ENCODE measurements at regions of chr3 and their contacts with region 1.

Region 1: GRCh38 chr3:152298393-152299242 is 29.9 kb downstream of the MBNL1 start:
- DNase-seq: peak; percentile 73
- ATAC-seq: peak; percentile 60
- H3K4me3 ChIP-seq: peak overlapping the region; percentile 29; the same call in 1 of the 2 replicates
- H3K27ac ChIP-seq: peak overlapping the region; percentile 73
- H3K4me1 ChIP-seq: peaks cover 39% of the 10 kb centered on the region
- H3K27me3 ChIP-seq: no peaks in the 10 kb centered on the region
- CTCF ChIP-seq: no peak

Region 2: DNA sequence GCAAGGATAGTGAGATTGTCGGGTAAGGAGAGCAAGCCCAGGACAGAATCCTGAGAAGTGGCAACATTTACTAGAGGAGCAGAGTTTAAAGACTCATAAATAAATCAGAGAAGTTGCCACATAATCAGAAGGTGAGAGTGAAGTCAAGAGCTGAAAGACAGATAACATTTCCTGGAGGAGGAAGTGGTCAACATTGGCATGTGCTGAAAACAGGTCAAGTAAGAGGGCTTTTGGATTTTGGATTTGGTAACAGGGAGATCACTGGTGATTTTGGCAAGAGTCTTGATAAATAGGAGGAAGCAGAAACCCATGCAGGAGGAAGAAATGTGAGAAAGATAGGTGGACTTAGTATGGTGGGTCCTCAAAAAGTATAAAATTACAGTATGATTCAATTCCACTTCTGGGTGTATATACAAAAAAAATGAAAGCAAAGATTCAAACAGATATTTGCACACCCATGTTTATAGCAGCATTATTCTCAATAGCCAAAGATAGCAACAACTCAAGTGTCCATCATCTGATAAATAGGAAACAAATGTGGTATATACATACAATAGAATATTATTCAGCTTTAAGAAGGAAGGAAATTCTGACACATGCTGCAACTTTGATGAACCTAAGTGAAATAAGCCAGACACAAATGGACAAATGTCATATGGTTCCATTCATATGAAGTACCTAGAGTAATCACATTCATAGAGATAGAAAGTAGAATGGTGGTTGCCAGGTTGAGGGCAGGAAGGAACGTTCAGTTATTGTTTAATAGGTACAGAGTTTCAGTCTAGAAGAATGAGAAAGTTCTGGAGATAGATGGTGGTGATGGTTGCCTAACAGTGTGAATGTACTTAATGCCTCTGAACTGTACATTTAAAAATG is 57.2 kb before region 1 on chr3:
- CTCF ChIA-PET with region 1: no interaction called
- POLR2A ChIA-PET with region 1: no interaction called
- intact Hi-C with region 1: no loop called
- DNase-seq: peak; percentile 42
- ATAC-seq: no peak
- H3K4me3 ChIP-seq: no peak overlapping the region
- H3K27ac ChIP-seq: no peak overlapping the region
- H3K4me1 ChIP-seq: peaks cover 13% of the 10 kb centered on the region; the same call in 1 of the 2 replicates
- H3K27me3 ChIP-seq: no peaks in the 10 kb centered on the region
- CTCF ChIP-seq: no peak

Region 3: DNA sequence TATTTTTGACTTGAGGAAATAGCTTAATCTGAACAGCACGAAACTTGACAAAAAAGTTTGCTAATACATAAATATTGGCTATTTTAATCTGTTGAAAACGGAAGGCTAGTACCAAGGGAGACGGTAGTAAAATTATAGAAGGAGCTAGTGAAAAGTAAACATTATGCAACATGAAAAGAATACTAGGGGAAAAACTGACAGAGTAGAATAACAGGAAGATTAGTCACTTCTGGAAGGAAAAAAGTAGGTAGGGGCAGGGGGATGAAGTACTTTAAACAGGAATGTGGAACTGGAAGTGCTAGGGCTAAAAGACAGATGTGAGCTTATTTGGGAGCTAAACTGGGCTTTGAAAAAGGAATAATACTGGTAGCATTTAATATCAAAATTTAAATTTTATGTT is 30.2 kb after region 1 on chr3:
- CTCF ChIA-PET with region 1: interaction called, 3 read pairs
- POLR2A ChIA-PET with region 1: interaction called, 13 read pairs
- intact Hi-C with region 1: no loop called
- DNase-seq: peak; percentile 94
- ATAC-seq: peak; percentile 63
- H3K4me3 ChIP-seq: peak overlapping the region; percentile 52
- H3K27ac ChIP-seq: peak overlapping the region; percentile 93
- H3K4me1 ChIP-seq: peaks cover 58% of the 10 kb centered on the region
- H3K27me3 ChIP-seq: no peaks in the 10 kb centered on the region
- CTCF ChIP-seq: no peak

Region 4: DNA sequence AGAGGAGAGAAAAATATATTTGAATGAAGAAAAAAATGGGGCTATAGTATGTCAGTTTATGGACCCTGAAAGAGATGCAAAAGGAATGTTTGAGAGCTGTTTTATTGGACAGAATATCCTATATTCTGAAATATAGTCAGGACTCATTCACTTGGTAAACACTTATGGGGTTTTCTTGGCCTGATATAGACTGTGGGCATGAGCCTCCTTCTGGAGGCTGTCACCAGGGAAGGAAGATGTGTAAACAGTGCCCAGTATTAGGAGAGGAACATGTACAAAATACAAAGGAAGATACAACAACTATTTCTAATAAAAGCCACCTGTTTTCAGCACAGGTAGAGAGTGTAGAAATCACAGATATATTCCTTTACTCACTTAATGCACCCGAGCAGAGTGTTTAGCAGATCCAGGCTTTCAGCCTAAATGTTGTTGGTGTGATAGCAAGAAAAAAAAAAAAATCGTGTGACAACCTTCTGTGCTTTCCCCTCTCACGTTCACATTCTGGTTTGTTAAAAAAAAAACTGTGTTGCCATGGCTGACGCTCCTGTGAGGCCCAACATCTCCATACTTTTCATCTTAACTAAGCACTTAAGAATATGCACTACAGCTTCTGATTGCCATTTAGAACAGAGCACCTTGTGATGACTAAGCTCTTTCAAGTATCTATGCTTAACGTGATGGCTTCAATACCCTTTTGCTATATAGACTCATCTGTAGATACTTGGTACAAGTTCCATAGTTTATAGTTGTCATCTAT is 104.3 kb after region 1 on chr3:
- CTCF ChIA-PET with region 1: no interaction called
- POLR2A ChIA-PET with region 1: interaction called, 14 read pairs
- intact Hi-C with region 1: no loop called
- DNase-seq: peak; percentile 31
- ATAC-seq: peak; percentile 62
- H3K4me3 ChIP-seq: no peak overlapping the region
- H3K27ac ChIP-seq: 0 out of 2 replicates have a peak overlapping the region, but pooled peaks have one; percentile 17
- H3K4me1 ChIP-seq: peaks cover 59% of the 10 kb centered on the region
- H3K27me3 ChIP-seq: no peaks in the 10 kb centered on the region
- CTCF ChIP-seq: no peak

Region 5: GRCh38 chr3:152539191-152539768 is 240.7 kb after region 1 on chr3:
- CTCF ChIA-PET with region 1: no interaction called
- POLR2A ChIA-PET with region 1: interaction called, 16 read pairs
- intact Hi-C with region 1: no loop called
- DNase-seq: no peak
- ATAC-seq: no peak; the same call in 1 of the 2 replicates
- H3K4me3 ChIP-seq: no peak overlapping the region
- H3K27ac ChIP-seq: no peak overlapping the region
- H3K4me1 ChIP-seq: no peaks in the 10 kb centered on the region
- H3K27me3 ChIP-seq: peaks cover 10% of the 10 kb centered on the region; the same call in 1 of the 2 replicates
- CTCF ChIP-seq: peak; percentile 58

Region 6: DNA sequence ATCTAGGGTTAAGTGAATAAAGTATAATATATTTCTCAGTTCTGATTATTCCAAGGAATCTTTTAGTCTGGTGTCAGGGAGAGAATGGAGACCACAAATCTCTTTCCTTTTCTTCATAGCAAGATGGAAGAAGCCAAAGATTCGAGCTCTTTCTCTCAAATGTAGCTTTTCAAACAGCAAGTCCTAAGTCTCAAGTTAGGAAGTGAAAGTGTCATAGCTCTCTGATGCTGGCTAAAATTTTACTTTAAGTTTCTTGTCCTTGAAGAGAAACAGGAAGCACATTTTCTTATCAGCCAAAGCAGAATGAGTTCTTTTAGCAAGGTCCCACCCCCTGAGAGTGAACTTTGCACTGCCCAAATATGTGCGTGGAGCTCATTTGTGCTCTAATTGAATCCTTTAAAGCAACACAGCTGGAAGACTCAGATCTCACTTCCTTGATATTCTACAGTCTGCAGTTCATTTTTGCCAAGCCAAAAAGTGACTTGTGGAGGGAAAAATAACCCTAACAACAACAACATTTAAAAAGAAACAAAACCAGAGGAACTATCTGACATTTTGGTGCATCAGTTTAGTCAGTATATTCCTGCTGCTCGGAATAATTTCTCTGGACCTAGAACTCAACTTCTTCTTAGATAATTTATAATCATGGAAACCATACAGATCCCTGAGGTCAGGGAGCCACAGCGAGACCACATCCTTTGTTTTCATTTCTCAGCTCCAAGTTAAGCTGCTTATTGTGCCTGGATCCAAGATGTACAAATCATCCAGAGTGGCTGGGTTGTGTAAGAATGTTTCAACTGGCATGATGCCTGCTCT is 297.6 kb after region 1 on chr3:
- CTCF ChIA-PET with region 1: no interaction called
- POLR2A ChIA-PET with region 1: no interaction called
- intact Hi-C with region 1: no loop called
- DNase-seq: no peak
- ATAC-seq: no peak
- H3K4me3 ChIP-seq: no peak overlapping the region
- H3K27ac ChIP-seq: no peak overlapping the region
- H3K4me1 ChIP-seq: no peaks in the 10 kb centered on the region
- H3K27me3 ChIP-seq: peaks cover 35% of the 10 kb centered on the region
- CTCF ChIP-seq: no peak

Measured in PC-3 (cell line).